Gastrocnemius medialis (tissue), 4 donors: ENCODE measurements at regions of chr4 and their contacts with region 1.

Region 1: DNA sequence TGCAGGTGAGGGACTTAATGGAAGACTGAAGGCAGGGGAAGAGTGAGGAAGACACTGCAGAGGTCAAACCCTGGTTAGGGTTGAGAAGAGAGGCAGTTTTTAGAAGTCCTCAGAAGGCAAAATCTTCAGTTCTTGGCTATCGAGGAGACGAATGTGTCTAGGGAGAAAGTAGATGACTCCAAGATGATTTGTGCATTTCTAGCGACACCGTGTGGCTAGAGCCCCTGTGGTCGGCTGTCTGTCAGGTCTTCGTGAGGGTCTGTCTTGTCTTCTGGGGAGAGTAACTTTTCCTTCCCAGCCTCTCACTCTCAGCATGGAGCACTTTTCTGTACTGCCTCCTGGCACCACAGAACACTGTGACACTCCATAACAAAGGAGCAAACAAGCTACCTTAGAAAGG is 458.1 kb downstream of the STIM2 start:
- DNase-seq: no peak
- ATAC-seq: no peak
- H3K4me3 ChIP-seq: no peak overlapping the region
- H3K27ac ChIP-seq: no peak overlapping the region
- H3K4me1 ChIP-seq: no peaks in the 10 kb centered on the region
- H3K27me3 ChIP-seq: no peaks in the 10 kb centered on the region
- CTCF ChIP-seq: peak in 1 of 5 experiments; percentile 15
- POLR2A ChIP-seq: no peak

Region 2: GRCh38 chr4:27057662-27058061 is 261.1 kb before region 1 on chr4:
- in situ Hi-C with region 1: no loop called
- intact Hi-C with region 1: loop called (anchors 5 kb)
- DNase-seq: no peak
- ATAC-seq: no peak
- H3K4me3 ChIP-seq: no peak overlapping the region
- H3K27ac ChIP-seq: no peak overlapping the region
- H3K4me1 ChIP-seq: no peaks in the 10 kb centered on the region
- H3K27me3 ChIP-seq: no peaks in the 10 kb centered on the region
- CTCF ChIP-seq: no peak
- POLR2A ChIP-seq: no peak

Region 3: GRCh38 chr4:27397886-27398285 is 79.1 kb after region 1 on chr4:
- in situ Hi-C with region 1: no loop called
- intact Hi-C with region 1: no loop called
- DNase-seq: no peak
- ATAC-seq: no peak
- H3K4me3 ChIP-seq: no peak overlapping the region
- H3K27ac ChIP-seq: no peak overlapping the region
- H3K4me1 ChIP-seq: no peaks in the 10 kb centered on the region
- H3K27me3 ChIP-seq: no peaks in the 10 kb centered on the region
- CTCF ChIP-seq: no peak
- POLR2A ChIP-seq: no peak